Common myeloid progenitor, CD34-positive (primary cell): ENCODE measurements at regions of chr2 and their contacts with region 1.

Region 1: GRCh38 chr2:85707304-85707703 is 13.1 kb downstream of the GNLY start:
- DNase-seq: peak; percentile 91 to 95 (median 93)
- H3K4me3 ChIP-seq: no peak overlapping the region
- H3K27ac ChIP-seq: no peak overlapping the region
- H3K4me1 ChIP-seq: peaks cover 19 to 72% (median 55%) of the 10 kb centered on the region in 4 experiments
- H3K27me3 ChIP-seq: no peaks in the 10 kb centered on the region

Region 2: DNA sequence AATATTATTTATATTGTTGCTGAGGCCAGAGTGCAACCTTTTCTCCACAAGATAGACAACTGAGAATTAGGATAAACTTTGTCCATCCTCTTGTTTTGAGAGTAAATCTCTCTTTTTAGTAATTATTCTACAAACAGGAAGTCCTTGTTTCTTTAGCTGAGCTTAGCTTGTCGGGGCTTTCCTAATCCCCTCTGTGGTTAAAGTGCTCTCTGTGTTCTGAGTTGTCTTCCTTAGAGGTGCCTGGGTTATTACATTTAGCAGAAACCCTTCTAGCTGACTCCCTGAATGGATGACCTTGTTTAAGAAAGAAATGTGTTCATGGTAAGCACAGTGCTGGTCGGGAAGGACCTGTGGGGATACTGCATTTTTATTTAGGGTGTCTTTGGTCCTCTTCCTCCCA is 78.6 kb before region 1 on chr2:
- CTCF ChIA-PET with region 1: no interaction called
- POLR2A ChIA-PET with region 1: no interaction called
- DNase-seq: peak in 1 of 3 donors; percentile 17
- H3K4me3 ChIP-seq: no peak overlapping the region
- H3K27ac ChIP-seq: peak overlapping the region in 1 of 2 experiments; percentile 34
- H3K4me1 ChIP-seq: no peaks in the 10 kb centered on the region
- H3K27me3 ChIP-seq: no peaks in the 10 kb centered on the region

Region 3: DNA sequence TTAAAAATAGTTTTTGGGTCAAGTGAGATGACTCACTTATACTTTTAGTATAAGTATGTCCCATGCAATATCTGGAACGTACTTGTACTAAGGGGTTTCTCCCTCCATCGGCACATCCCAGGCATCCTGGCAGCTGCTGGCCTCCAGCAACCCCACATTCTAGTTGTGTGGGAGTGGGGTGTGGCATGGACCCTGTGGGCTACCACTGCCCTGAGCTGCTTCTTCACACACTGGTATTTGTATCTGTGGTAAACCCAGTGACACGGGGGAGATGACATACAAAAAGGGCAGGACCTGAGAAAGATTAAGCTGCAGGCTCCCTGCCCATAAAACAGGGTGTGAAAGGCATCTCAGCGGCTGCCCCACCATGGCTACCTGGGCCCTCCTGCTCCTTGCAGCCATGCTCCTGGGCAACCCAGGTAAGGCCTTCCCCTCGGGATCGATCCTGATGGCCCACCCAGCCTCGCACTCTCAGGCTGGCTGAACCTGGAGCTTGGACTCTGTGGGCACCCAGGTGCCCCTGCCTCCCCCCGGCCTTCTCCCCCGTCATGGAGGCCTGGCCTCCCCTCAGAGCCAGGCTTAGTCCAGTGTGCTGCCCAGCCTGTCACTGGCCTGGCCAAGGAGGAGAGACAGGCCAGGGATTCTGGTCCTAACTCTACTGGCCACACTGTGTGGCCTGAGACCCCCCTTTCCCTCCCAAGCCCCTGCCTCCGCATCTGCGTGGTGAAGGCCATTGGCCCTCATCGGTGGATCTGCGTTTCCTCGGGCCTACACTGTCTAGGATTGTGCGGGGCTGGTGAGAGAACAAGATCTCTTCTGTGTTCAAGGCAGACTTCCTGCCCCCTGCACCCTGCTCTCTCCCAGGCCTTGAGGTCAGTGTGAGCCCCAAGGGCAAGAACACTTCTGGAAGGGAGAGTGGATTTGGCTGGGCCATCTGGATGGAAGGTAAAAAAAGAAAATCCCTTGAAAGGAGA is 13.0 kb before region 1 on chr2 and contains the start of gene GNLY:
- CTCF ChIA-PET with region 1: interaction called, 32 read pairs
- POLR2A ChIA-PET with region 1: no interaction called
- DNase-seq: no peak
- H3K4me3 ChIP-seq: no peak within 1 kb of the TSS
- H3K27ac ChIP-seq: no peak within 1 kb of the TSS
- H3K4me1 ChIP-seq: peaks cover 0 to 22% (median 15%) of the 10 kb centered on the region in 4 experiments
- H3K27me3 ChIP-seq: no peaks in the 10 kb centered on the region

Region 4: GRCh38 chr2:85758361-85759256 is 51.3 kb after region 1 on chr2:
- CTCF ChIA-PET with region 1: no interaction called
- POLR2A ChIA-PET with region 1: no interaction called
- DNase-seq: no peak
- H3K4me3 ChIP-seq: no peak overlapping the region
- H3K27ac ChIP-seq: no peak overlapping the region
- H3K4me1 ChIP-seq: peaks cover 0 to 21% (median 19%) of the 10 kb centered on the region in 4 experiments
- H3K27me3 ChIP-seq: peaks cover 0 to 43% (median 30%) of the 10 kb centered on the region in 5 experiments